Psoas muscle (tissue), 8 donors: ENCODE measurements at regions of chr11 and their contacts with region 1.

Region 1: GRCh38 chr11:18634140-18635032 is at the start of gene SPTY2D1:
- DNase-seq: peak; percentile 99 to 100
- ATAC-seq: peak; percentile 99
- H3K4me3 ChIP-seq: peak within 1 kb of the TSS; percentile 89
- H3K27ac ChIP-seq: peak within 1 kb of the TSS; percentile 93
- H3K4me1 ChIP-seq: peaks cover 11% of the 10 kb centered on the region
- H3K27me3 ChIP-seq: no peaks in the 10 kb centered on the region
- CTCF ChIP-seq: no peak
- total RNA-seq, gene SPTY2D1: 13.7 to 16.8 (median 15.1) TPM

Region 2: DNA sequence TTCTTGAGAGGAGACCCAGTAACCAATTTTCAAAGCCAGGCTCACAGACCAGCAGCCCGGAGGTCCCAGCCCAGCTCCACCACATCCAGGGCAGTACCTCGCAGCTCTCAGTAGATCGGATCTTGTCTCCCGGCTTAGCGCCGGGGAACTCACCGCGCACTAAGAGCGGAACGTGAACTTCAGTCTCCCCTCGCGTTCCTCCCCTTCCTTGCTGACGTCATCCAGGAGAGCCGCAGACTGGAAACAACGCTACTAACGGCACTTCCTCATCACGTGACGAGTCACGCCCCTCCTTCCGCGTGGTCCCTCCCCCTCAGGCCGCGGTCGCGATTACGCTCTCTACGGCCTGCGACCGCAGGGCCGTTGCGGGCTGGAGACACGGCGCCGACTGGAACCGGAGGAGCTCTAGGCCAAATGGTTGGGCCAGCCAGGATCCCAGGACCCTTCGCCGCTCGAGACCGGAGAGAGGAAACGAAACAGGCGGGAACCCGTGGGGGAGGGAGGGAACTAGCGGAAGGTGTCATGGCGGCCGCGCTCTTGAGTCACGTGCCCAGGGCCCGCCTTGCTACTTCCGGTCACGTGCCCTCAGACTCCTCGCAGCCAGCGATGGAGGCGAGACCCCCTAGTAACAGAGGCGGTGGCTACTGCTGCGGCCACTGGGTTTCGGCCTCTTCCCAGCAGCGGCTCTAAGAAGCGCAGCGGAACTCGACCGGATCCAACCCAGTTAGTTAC is 312.2 kb before region 1 on chr11 and contains the starts of genes GTF2H1 and HPS5:
- intact Hi-C with region 1: loop called (anchors 2 to 5 kb)
- DNase-seq: peak; percentile 94 to 97
- ATAC-seq: peak; percentile 98 to 99 (median 99)
- H3K4me3 ChIP-seq: peak within 1 kb of the TSS; percentile 83
- H3K27ac ChIP-seq: peak within 1 kb of the TSS; percentile 95
- H3K4me1 ChIP-seq: peaks cover 34% of the 10 kb centered on the region
- H3K27me3 ChIP-seq: no peaks in the 10 kb centered on the region
- CTCF ChIP-seq: no peak
- total RNA-seq, gene GTF2H1: 14.5 to 25.2 (median 19.4) TPM
- total RNA-seq, gene HPS5: 7.0 to 11.9 (median 8.8) TPM

Region 3: GRCh38 chr11:18540207-18541009 is 94.0 kb before region 1 on chr11:
- intact Hi-C with region 1: loop called in 1 of 2 experiments (anchors 10 kb)
- DNase-seq: no peak
- ATAC-seq: no peak
- H3K4me3 ChIP-seq: no peak overlapping the region
- H3K27ac ChIP-seq: no peak overlapping the region
- H3K4me1 ChIP-seq: no peaks in the 10 kb centered on the region
- H3K27me3 ChIP-seq: no peaks in the 10 kb centered on the region
- CTCF ChIP-seq: peak; percentile 35

Region 4: DNA sequence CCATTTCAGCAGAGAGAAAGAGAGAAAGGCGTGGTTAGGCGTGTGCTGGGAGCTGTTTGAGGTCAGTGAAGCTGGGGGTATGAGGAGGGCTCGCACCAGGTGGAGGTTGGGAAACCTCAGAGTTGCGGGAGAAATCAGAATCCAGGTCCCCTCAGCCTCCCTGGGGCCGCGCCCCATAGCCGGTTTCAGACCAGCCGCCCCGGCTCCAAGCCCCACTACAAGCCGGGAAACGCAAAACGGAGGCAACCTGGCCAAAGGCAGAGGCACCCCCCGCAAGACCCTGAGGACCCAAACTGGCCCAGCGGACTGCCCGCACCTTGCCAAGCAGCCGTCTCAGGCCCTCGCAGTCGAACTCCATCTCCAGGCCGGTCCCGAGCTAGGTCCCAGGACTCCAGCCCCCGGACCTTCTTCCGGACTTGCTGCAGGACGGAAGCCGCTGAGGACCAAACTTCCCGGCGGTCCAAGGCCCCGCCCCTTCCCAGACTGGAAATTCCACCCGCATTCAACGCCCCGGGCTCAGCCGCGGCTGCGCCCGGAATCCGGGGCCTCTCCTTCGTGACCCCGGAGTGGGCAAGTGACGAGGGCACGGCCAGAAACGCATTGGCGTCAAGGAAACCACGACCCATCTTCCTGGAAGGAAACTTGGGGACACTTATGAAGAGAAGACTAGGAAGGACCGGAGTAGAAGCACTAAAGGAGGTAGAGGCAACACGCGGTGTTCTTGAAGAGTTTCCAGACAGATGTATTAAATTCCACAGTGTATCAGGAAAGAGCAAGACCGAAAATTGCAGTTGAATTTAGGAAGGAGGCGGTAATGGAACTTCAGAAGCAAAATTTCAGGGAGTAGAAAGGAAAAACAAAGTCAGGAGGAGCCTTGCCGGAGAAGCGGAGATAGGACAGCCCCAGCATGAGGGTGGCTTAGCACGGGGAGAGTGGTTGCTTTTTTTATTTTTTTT is 45.8 kb before region 1 on chr11 and contains the start of gene UEVLD:
- intact Hi-C with region 1: loop called (anchors 2 to 10 kb)
- DNase-seq: peak; percentile 93 to 94
- ATAC-seq: peak; percentile 96 to 98 (median 98)
- H3K4me3 ChIP-seq: peak within 1 kb of the TSS; percentile 96
- H3K27ac ChIP-seq: peak within 1 kb of the TSS; percentile 85
- H3K4me1 ChIP-seq: peaks cover 35% of the 10 kb centered on the region
- H3K27me3 ChIP-seq: no peaks in the 10 kb centered on the region
- CTCF ChIP-seq: no peak
- total RNA-seq, gene UEVLD: 9.9 to 19.0 (median 14.2) TPM

Region 5: GRCh38 chr11:18677560-18677959 is 43.2 kb after region 1 on chr11:
- intact Hi-C with region 1: no loop called
- DNase-seq: no peak
- ATAC-seq: no peak
- H3K4me3 ChIP-seq: no peak overlapping the region
- H3K27ac ChIP-seq: no peak overlapping the region
- H3K4me1 ChIP-seq: no peaks in the 10 kb centered on the region
- H3K27me3 ChIP-seq: no peaks in the 10 kb centered on the region
- CTCF ChIP-seq: no peak